ENCODE measurements at regions of chr15 and their contacts with region 1.

Region 1: GRCh38 chr15:74775132-74775562 is 6.7 kb upstream of the CSK start:
- DNase-seq: peak in 2 of 3 donors; percentile 41 to 52
- H3K4me3 ChIP-seq: peak overlapping the region in 1 of 3 experiments; percentile 35
- H3K4me3 Mint-ChIP-seq: peak overlapping the region in 1 of 2 donors; percentile 51
- H3K27ac ChIP-seq: peak overlapping the region in 1 of 2 donors; percentile 62
- H3K27ac Mint-ChIP-seq: peak overlapping the region; percentile 42 to 99 (median 79)
- H3K4me1 ChIP-seq: peaks cover 75 to 82% of the 10 kb centered on the region in 2 donors
- H3K4me1 Mint-ChIP-seq: peaks cover 80% of the 10 kb centered on the region
- H3K27me3 ChIP-seq: no peaks in the 10 kb centered on the region
- H3K27me3 Mint-ChIP-seq: peaks cover 3 to 8% (median 5%) of the 10 kb centered on the region in 3 donors
- CTCF ChIP-seq: no peak

Region 2: GRCh38 chr15:74598126-74598842 is 176.9 kb before region 1 on chr15:
- intact Hi-C with region 1: no loop called
- DNase-seq: peak; percentile 74 to 86 (median 80)
- H3K4me3 ChIP-seq: peak overlapping the region; percentile 63 to 97 (median 73)
- H3K4me3 Mint-ChIP-seq: peak overlapping the region; percentile 97 to 100
- H3K27ac ChIP-seq: peak overlapping the region; percentile 65 to 85
- H3K27ac Mint-ChIP-seq: peak overlapping the region; percentile 91 to 99 (median 96)
- H3K4me1 ChIP-seq: peaks cover 13 to 15% of the 10 kb centered on the region in 2 donors
- H3K4me1 Mint-ChIP-seq: peaks cover 15% of the 10 kb centered on the region
- H3K27me3 ChIP-seq: no peaks in the 10 kb centered on the region
- H3K27me3 Mint-ChIP-seq: no peaks in the 10 kb centered on the region
- CTCF ChIP-seq: no peak

Region 3: DNA sequence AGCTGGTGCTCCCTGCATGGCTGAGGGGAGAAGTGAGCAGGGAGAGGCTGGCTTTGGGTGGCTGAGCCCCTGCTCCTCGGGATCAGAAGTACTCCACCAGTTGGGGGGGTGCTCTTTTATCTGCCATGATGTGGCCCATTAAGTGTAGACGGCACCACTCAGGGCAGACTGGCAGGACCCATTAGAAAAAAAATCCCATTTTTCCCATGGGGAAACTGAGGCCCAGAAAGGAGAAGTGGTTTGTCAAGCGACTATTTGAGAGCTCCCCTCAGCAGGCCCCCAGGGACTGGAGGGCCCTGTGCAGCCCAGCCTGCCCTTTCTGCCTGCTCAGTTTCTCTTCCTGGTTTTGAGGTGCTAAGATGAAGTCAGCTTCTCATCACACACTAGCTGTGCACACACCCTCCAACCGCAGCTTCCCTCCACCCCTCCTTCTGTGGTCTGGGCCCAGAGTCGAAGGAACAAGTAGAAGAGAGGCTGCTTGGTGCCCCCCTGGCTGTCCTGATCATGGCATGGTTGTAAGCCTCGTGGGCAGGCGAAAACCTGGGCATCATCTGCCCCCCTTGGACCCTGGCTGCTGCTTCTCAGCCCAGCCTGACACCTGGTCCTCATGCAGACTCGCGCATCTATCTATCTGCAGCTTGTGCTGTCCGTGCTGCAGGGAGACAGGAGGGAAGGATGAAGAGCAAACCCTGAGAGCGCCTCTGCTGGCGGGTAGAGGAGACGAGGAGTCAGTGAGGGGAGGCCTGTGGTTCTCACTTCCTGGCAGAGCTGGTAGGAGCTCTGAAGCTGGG is 12.3 kb after region 1 on chr15:
- intact Hi-C with region 1: loop called in 1 of 2 experiments (anchors 1 kb)
- DNase-seq: peak; percentile 92 to 96 (median 95)
- H3K4me3 ChIP-seq: peak overlapping the region in 2 of 3 experiments; percentile 46 to 100
- H3K4me3 Mint-ChIP-seq: peak overlapping the region; percentile 94 to 95
- H3K27ac ChIP-seq: peak overlapping the region; percentile 96 to 97
- H3K27ac Mint-ChIP-seq: peak overlapping the region; percentile 99 to 100 (median 100)
- H3K4me1 ChIP-seq: peaks cover 91 to 95% of the 10 kb centered on the region in 2 donors
- H3K4me1 Mint-ChIP-seq: peaks cover 86% of the 10 kb centered on the region
- H3K27me3 ChIP-seq: no peaks in the 10 kb centered on the region
- H3K27me3 Mint-ChIP-seq: peaks cover 0 to 2% (median 0%) of the 10 kb centered on the region in 3 donors
- CTCF ChIP-seq: peak; percentile 82

Measured in CD14-positive monocyte (primary cell).